Left cardiac atrium (tissue), 4 donors: ENCODE measurements at regions of chr5 and their contacts with region 1.

Region 1: DNA sequence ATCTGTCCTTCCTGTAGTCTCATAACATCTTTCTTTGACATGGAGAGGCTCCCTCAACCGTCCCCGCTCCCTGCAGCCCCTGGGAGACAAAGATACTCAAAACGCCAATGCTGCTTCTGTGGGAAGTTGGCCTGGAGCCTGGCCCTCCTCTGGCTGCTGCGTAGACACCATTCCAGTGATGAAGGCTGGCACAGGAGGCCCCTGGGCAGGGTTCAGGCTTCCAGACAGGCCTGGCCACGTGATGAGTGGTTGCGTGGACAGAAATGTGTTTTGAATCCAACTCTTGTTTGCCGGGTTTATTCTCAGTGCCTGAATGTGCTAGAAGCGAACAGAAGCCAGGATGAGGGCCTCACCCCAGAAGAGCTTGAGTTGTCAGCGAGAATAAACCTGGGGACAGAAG is 43.2 kb upstream of the NKX2-5 start:
- DNase-seq: peak; percentile 80
- ATAC-seq: peak; percentile 92

Region 2: GRCh38 chr5:173242675-173243121 is 35.5 kb before region 1 on chr5:
- intact Hi-C with region 1: loop called in 1 of 2 experiments (anchors 5 kb)
- DNase-seq: no peak
- ATAC-seq: peak; percentile 46 to 50

Region 3: DNA sequence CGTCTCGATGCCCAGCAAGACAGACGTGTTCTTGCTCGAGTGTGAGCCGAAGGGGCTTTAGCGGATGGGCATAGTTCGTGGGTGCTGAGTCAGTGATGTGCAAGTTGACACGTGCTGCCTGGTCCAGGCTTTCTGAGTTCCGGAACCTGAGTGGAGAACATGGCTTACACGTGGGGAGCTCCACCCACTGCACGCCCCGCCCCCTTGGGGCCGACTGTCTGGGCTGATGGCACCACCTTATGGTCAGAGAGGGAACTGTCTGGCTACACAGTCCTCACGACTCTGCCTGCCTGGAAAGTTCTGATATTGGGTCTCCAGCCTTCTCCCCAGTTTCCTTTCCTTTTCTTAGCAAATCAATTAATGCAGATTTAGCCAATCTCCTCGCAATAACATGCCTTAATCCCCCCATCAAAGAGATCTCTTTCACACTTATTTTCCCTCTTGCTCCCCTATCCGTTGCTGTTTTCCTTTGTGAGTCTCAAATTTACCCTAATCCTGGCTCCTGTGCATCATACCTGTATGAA is 53.8 kb after region 1 on chr5:
- intact Hi-C with region 1: no loop called
- DNase-seq: peak; percentile 92
- ATAC-seq: peak; percentile 73 to 82